Activated naive CD4-positive, alpha-beta T cell treated with anti-CD3 and anti-CD28 coated beads for 36 hours (primary cell): ENCODE measurements at regions of chr5 and their contacts with region 1.

Region 1: DNA sequence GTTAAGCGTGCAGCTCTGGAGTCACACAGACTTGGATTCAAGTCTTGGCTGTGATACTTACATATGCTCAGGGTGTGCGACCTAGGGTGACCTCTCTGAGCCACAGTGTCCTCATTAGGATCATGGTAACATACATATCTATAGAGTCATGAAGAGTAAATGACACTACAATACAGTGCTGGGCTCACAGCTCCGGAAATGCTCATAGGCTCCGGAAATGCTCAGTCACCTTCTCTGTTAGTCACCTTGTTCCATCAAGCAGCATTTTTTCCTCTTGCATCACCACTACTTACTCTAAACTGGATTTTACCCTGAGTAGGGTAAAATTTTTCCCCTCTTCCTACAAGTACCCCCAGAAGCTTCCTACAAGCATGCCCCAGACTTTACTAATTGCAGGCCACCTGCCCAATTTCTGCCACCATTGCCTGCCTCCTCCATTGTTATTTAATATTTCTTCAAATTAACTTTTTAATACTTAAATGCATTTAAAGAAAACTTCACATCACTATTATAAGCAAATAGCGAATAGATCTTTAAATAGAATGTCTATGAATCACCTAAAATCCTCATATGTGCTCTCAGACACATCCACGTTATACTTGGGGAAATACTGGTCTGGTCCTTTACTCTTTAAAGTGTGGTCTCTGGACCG is 147.6 kb upstream of the SPRY4 start:
- DNase-seq: peak; percentile 75
- H3K4me3 Mint-ChIP-seq: no peak overlapping the region
- H3K27ac Mint-ChIP-seq: peak overlapping the region; percentile 69
- H3K4me1 Mint-ChIP-seq: peaks cover 20% of the 10 kb centered on the region
- H3K27me3 Mint-ChIP-seq: no peaks in the 10 kb centered on the region

Region 2: DNA sequence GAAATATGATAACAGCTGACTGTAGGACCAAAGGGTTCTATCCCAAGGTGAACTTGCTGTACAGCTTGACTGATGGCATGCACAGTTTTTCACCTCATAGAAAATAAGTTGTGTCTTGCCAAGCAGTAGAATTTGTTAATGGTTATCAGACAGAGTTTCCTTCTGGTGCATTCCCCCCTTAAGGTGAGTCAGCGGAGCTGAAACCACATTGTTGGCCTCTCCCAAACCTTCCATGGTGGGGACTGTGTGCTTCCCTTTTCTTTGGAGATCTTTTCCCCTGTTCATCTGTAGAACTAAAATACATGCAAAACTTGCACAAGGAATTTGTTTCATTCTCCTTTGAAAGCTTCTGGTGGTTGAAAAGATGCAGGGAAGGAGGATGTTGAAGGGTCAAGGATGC is 33.6 kb after region 1 on chr5:
- CTCF ChIA-PET with region 1: no interaction called
- intact Hi-C with region 1: loop called (anchors 1 kb)
- DNase-seq: peak; percentile 34
- H3K4me3 Mint-ChIP-seq: no peak overlapping the region
- H3K27ac Mint-ChIP-seq: no peak overlapping the region
- H3K4me1 Mint-ChIP-seq: peaks cover 51% of the 10 kb centered on the region
- H3K27me3 Mint-ChIP-seq: no peaks in the 10 kb centered on the region

Region 3: DNA sequence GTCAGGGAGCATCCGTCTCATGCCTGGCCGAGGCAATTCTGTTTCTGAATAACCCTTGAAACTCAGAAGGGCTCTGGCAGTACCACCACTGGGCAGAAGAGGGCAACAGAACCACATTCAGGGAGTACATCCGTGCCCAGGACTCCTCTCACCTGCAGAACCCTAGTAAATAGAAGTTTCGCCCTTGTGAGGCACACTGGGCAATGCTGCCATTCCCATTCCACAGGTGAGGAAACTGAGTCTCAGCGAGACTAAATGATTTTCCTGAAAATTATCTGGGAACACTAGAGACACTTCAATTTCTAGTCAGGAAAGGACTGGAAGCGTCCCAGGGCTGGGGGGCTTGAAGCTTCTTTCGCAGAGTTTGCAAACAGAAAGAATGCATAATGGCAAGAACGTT is 138.7 kb after region 1 on chr5:
- CTCF ChIA-PET with region 1: no interaction called
- intact Hi-C with region 1: no loop called
- DNase-seq: peak; percentile 88
- H3K4me3 Mint-ChIP-seq: no peak overlapping the region
- H3K27ac Mint-ChIP-seq: no peak overlapping the region
- H3K4me1 Mint-ChIP-seq: no peaks in the 10 kb centered on the region
- H3K27me3 Mint-ChIP-seq: peaks cover 5% of the 10 kb centered on the region